ENCODE measurements at regions of chr3 and their contacts with region 1.

Region 1: DNA sequence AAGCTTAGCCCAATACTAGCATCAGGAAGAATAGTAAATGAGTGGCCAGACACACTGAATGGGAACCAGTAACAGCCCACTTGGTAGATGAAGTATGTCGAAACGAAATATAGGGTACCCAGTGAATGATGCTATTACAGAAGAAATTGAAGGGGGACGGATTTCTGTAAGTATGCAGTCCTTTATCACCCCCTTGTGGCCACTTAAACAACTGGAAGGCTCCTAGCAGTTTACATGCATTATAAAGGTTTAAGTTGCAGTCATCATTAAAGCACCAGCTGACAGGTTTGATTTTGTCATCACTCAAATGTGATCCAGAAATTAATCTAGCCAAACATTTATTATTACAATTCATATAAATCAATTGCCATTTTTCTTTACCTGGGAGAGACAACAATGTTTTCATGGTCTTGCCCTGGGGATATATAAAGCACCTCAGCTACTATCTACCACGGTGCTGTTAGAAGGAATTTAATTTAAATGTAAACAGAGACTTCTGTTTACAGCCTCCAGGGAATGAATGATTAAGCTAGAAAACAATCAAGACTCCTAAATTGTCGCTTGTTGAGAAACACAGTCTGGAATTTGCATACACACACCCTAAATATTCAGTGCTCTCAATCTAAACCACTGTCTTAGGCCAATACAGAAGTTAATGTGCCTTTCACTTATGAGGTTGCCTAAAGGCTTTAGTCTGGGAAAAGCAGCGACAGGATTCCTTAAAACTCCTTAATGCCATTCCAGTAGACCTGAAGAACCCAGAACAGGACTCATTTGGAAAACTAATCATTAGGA is 7.8 kb downstream of the EIF1B start:
- DNase-seq: peak; percentile 68
- H3K4me3 Mint-ChIP-seq: no peak overlapping the region
- H3K27ac Mint-ChIP-seq: no peak overlapping the region
- H3K4me1 Mint-ChIP-seq: peaks cover 5% of the 10 kb centered on the region
- H3K27me3 Mint-ChIP-seq: no peaks in the 10 kb centered on the region
- CTCF ChIP-seq: peak; percentile 73

Region 2: GRCh38 chr3:39406368-39407258 is 910.6 kb before region 1 on chr3 and contains the start of gene RPSA:
- CTCF ChIA-PET with region 1: no interaction called
- POLR2A ChIA-PET with region 1: interaction called, 3 read pairs
- intact Hi-C with region 1: loop called (anchors 10 kb)
- DNase-seq: peak; percentile 97
- H3K4me3 Mint-ChIP-seq: peak within 1 kb of the TSS; percentile 80
- H3K27ac Mint-ChIP-seq: peak within 1 kb of the TSS; percentile 96
- H3K4me1 Mint-ChIP-seq: peaks cover 13% of the 10 kb centered on the region
- H3K27me3 Mint-ChIP-seq: no peaks in the 10 kb centered on the region
- CTCF ChIP-seq: no peak
- total RNA-seq, gene RPSA: 1,984 and 2,115 TPM in 2 replicates

Region 3: GRCh38 chr3:39639344-39640236 is 677.7 kb before region 1 on chr3:
- CTCF ChIA-PET with region 1: interaction called, 3 read pairs
- POLR2A ChIA-PET with region 1: no interaction called
- intact Hi-C with region 1: loop called (anchors 10 kb)
- DNase-seq: peak; percentile 92
- H3K4me3 Mint-ChIP-seq: no peak overlapping the region
- H3K27ac Mint-ChIP-seq: peak overlapping the region; percentile 35
- H3K4me1 Mint-ChIP-seq: peaks cover 22% of the 10 kb centered on the region
- H3K27me3 Mint-ChIP-seq: no peaks in the 10 kb centered on the region
- CTCF ChIP-seq: no peak

Region 4: GRCh38 chr3:40191850-40192448 is 125.3 kb before region 1 on chr3:
- CTCF ChIA-PET with region 1: interaction called, 452 read pairs
- POLR2A ChIA-PET with region 1: interaction called, 16 read pairs
- intact Hi-C with region 1: loop called (anchors 1 kb)
- DNase-seq: peak; percentile 65
- H3K4me3 Mint-ChIP-seq: no peak overlapping the region
- H3K27ac Mint-ChIP-seq: no peak overlapping the region
- H3K4me1 Mint-ChIP-seq: peaks cover 4% of the 10 kb centered on the region
- H3K27me3 Mint-ChIP-seq: no peaks in the 10 kb centered on the region
- CTCF ChIP-seq: peak; percentile 96

Region 5: GRCh38 chr3:40207796-40208195 is 109.5 kb before region 1 on chr3:
- CTCF ChIA-PET with region 1: interaction called, 13 read pairs
- POLR2A ChIA-PET with region 1: no interaction called
- intact Hi-C with region 1: no loop called
- DNase-seq: peak; percentile 52
- H3K4me3 Mint-ChIP-seq: no peak overlapping the region
- H3K27ac Mint-ChIP-seq: no peak overlapping the region
- H3K4me1 Mint-ChIP-seq: peaks cover 25% of the 10 kb centered on the region
- H3K27me3 Mint-ChIP-seq: no peaks in the 10 kb centered on the region
- CTCF ChIP-seq: no peak

Region 6: DNA sequence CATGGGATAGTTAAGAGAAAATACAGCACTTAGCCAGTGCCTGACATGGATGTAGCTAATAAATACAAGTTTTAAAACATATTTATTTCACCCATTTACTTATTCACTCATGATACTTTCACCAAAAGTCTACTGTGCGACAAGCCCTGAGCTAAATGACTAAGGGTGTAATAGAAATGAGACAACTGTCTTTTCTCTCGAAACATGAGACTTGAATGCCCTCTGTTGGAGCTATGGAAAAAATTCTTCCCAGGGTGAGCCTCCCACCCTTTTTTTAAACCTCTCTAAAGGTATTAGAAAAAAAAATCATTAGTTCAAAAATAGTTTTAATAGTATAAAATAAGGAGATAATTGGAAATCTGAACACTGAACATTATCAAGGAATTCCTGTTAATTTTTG is 115.5 kb after region 1 on chr3:
- CTCF ChIA-PET with region 1: interaction called, 10 read pairs
- POLR2A ChIA-PET with region 1: no interaction called
- intact Hi-C with region 1: no loop called
- DNase-seq: no peak
- H3K4me3 Mint-ChIP-seq: no peak overlapping the region
- H3K27ac Mint-ChIP-seq: no peak overlapping the region
- H3K4me1 Mint-ChIP-seq: no peaks in the 10 kb centered on the region
- H3K27me3 Mint-ChIP-seq: no peaks in the 10 kb centered on the region
- CTCF ChIP-seq: no peak

Measured in MCF 10A (cell line).